Activated CD4-positive, alpha-beta T cell treated with anti-CD3 and anti-CD28 coated beads for 36 hours (primary cell): ENCODE measurements at regions of chr18 and their contacts with region 1.

Region 1: GRCh38 chr18:58727776-58728500 is 56.7 kb downstream of the MALT1 start:
- DNase-seq: no peak
- ATAC-seq: no peak
- H3K4me3 Mint-ChIP-seq: no peak overlapping the region
- H3K27ac Mint-ChIP-seq: no peak overlapping the region
- H3K4me1 Mint-ChIP-seq: peaks cover 5% of the 10 kb centered on the region
- H3K27me3 Mint-ChIP-seq: no peaks in the 10 kb centered on the region

Region 2: GRCh38 chr18:56902653-56903052 is 1825.3 kb before region 1 on chr18:
- CTCF ChIA-PET with region 1: no interaction called
- POLR2A ChIA-PET with region 1: no interaction called
- intact Hi-C with region 1: no loop called
- DNase-seq: no peak
- ATAC-seq: no peak
- H3K4me3 Mint-ChIP-seq: no peak overlapping the region
- H3K27ac Mint-ChIP-seq: no peak overlapping the region
- H3K4me1 Mint-ChIP-seq: peaks cover 10% of the 10 kb centered on the region
- H3K27me3 Mint-ChIP-seq: no peaks in the 10 kb centered on the region

Region 3: GRCh38 chr18:58761241-58761969 is 33.5 kb after region 1 on chr18:
- CTCF ChIA-PET with region 1: interaction called, 13 read pairs
- POLR2A ChIA-PET with region 1: no interaction called
- intact Hi-C with region 1: no loop called
- DNase-seq: peak; percentile 27
- ATAC-seq: peak; percentile 53
- H3K4me3 Mint-ChIP-seq: no peak overlapping the region
- H3K27ac Mint-ChIP-seq: peak overlapping the region; percentile 2
- H3K4me1 Mint-ChIP-seq: peaks cover 13% of the 10 kb centered on the region
- H3K27me3 Mint-ChIP-seq: peaks cover 18% of the 10 kb centered on the region